Left colon (tissue), 2 donors: ENCODE measurements at regions of chr3 and their contacts with region 1.

Region 1: GRCh38 chr3:124905849-124906248 is 18.7 kb upstream of the ITGB5 start:
- DNase-seq: no peak
- ATAC-seq: no peak

Region 2: GRCh38 chr3:124761250-124761796 is 144.5 kb before region 1 on chr3:
- intact Hi-C with region 1: loop called in 1 of 2 experiments (anchors 2 kb)
- DNase-seq: peak; percentile 71 to 92
- ATAC-seq: peak; percentile 92